ENCODE measurements at regions of chr9 and their contacts with region 1.

Region 1: GRCh38 chr9:20262611-20263010 is 359.7 kb downstream of the MLLT3 start:
- DNase-seq: no peak
- ATAC-seq: no peak
- H3K4me3 ChIP-seq: no peak overlapping the region
- H3K27ac ChIP-seq: no peak overlapping the region
- H3K4me1 ChIP-seq: no peaks in the 10 kb centered on the region
- H3K27me3 ChIP-seq: peaks cover 2% of the 10 kb centered on the region; the same call in 1 of the 2 replicates
- CTCF ChIP-seq: no peak
- POLR2A ChIP-seq: no peak
- RAD21 ChIP-seq: no peak

Region 2: GRCh38 chr9:20125727-20126126 is 136.9 kb before region 1 on chr9:
- CTCF ChIA-PET with region 1: no interaction called
- POLR2A ChIA-PET with region 1: no interaction called
- dilution Hi-C with region 1: no loop called
- in situ Hi-C with region 1: no loop called
- intact Hi-C with region 1: no loop called
- DNase-seq: no peak
- ATAC-seq: no peak
- H3K4me3 ChIP-seq: no peak overlapping the region
- H3K27ac ChIP-seq: no peak overlapping the region
- H3K4me1 ChIP-seq: no peaks in the 10 kb centered on the region
- H3K27me3 ChIP-seq: no peaks in the 10 kb centered on the region; the same call in 1 of the 2 replicates
- CTCF ChIP-seq: no peak
- POLR2A ChIP-seq: no peak
- RAD21 ChIP-seq: no peak

Region 3: GRCh38 chr9:20209391-20210340 is 52.9 kb before region 1 on chr9:
- CTCF ChIA-PET with region 1: no interaction called
- POLR2A ChIA-PET with region 1: no interaction called
- dilution Hi-C with region 1: no loop called
- in situ Hi-C with region 1: no loop called
- intact Hi-C with region 1: loop called (anchors 10 kb)
- DNase-seq: no peak
- ATAC-seq: no peak
- H3K4me3 ChIP-seq: no peak overlapping the region
- H3K27ac ChIP-seq: no peak overlapping the region
- H3K4me1 ChIP-seq: no peaks in the 10 kb centered on the region
- H3K27me3 ChIP-seq: no peaks in the 10 kb centered on the region; the same call in 1 of the 2 replicates
- CTCF ChIP-seq: no peak
- POLR2A ChIP-seq: no peak
- RAD21 ChIP-seq: no peak

Measured in IMR-90 (cell line).